ENCODE measurements at regions of chrX and their contacts with region 1.

Region 1: DNA sequence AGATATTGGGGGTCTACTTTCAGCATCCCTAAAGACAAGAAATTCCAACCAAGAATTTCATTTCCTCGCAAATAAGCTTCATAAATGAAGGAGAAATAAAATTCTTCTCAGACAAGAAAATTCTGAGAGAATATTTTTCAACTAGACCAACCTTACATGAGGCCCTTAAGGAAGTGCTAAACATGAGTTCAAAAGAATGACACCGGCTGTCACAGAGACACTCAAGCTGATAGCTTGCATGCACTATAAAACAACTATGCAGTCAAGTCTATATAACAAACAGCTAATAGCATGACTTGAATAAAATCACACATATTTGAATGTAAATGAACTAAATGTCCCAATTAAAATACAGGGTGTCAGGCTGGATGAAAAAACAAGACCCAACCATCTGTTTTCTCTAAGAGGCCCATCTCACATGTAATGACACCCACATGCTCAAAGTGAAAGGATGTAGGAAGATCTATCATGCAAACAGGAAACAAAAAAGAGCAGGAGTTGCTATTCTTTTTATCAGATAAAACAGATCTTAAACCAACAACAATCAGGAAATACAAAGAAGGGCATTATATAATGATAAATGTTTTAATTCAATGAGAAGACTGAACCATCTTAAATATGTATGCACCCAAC is 27.2 kb downstream of the FAAH2 start:
- DNase-seq: no peak
- ATAC-seq: no peak
- H3K4me3 ChIP-seq: no peak overlapping the region
- H3K27ac ChIP-seq: no peak overlapping the region
- H3K4me1 ChIP-seq: no peaks in the 10 kb centered on the region
- H3K27me3 ChIP-seq: no peaks in the 10 kb centered on the region
- CTCF ChIP-seq: no peak
- EP300 ChIP-seq: no peak
- POLR2A ChIP-seq: no peak
- RAD21 ChIP-seq: no peak

Region 2: GRCh38 chrX:57266871-57267707 is 46.6 kb before region 1 on chrX:
- CTCF ChIA-PET with region 1: no interaction called
- POLR2A ChIA-PET with region 1: no interaction called
- RAD21 ChIA-PET with region 1: no interaction called
- SMC1A ChIA-PET with region 1: no interaction called
- in situ Hi-C with region 1: loop called (anchors 5 kb)
- intact Hi-C with region 1: no loop called
- DNase-seq: no peak
- ATAC-seq: no peak
- H3K4me3 ChIP-seq: no peak overlapping the region
- H3K27ac ChIP-seq: no peak overlapping the region
- H3K4me1 ChIP-seq: no peaks in the 10 kb centered on the region
- H3K27me3 ChIP-seq: no peaks in the 10 kb centered on the region
- CTCF ChIP-seq: no peak
- EP300 ChIP-seq: no peak
- POLR2A ChIP-seq: no peak
- RAD21 ChIP-seq: no peak

Region 3: DNA sequence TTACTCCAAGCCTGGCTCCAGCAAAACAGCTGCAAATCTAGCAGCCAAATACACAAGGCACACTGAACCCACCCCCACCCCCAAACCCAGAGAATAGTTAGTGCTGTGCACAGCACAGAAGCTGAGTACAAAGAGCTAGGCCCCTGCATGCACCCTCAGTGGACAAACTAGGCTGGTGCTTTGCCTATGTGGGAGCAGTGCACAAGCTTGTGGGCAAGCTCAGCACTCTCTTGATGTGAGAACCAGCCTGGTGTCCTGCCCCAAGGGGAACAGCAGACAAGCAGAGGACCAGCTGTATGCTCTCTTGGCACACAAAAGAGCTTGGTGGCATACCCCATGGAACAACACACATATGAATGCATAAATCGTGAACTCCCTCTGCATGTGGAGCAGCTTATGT is 54.5 kb after region 1 on chrX:
- CTCF ChIA-PET with region 1: no interaction called
- POLR2A ChIA-PET with region 1: no interaction called
- RAD21 ChIA-PET with region 1: no interaction called
- SMC1A ChIA-PET with region 1: no interaction called
- in situ Hi-C with region 1: no loop called
- intact Hi-C with region 1: no loop called
- DNase-seq: no peak
- ATAC-seq: no peak
- H3K4me3 ChIP-seq: no peak overlapping the region
- H3K27ac ChIP-seq: no peak overlapping the region
- H3K4me1 ChIP-seq: no peaks in the 10 kb centered on the region
- H3K27me3 ChIP-seq: no peaks in the 10 kb centered on the region
- CTCF ChIP-seq: no peak
- EP300 ChIP-seq: no peak
- POLR2A ChIP-seq: no peak
- RAD21 ChIP-seq: no peak

Measured in GM12878 (cell line).